Activated CD4-positive, alpha-beta T cell treated with anti-CD3 and anti-CD28 coated beads for 36 hours (primary cell): ENCODE measurements at regions of chr16 and their contacts with region 1.

Region 1: DNA sequence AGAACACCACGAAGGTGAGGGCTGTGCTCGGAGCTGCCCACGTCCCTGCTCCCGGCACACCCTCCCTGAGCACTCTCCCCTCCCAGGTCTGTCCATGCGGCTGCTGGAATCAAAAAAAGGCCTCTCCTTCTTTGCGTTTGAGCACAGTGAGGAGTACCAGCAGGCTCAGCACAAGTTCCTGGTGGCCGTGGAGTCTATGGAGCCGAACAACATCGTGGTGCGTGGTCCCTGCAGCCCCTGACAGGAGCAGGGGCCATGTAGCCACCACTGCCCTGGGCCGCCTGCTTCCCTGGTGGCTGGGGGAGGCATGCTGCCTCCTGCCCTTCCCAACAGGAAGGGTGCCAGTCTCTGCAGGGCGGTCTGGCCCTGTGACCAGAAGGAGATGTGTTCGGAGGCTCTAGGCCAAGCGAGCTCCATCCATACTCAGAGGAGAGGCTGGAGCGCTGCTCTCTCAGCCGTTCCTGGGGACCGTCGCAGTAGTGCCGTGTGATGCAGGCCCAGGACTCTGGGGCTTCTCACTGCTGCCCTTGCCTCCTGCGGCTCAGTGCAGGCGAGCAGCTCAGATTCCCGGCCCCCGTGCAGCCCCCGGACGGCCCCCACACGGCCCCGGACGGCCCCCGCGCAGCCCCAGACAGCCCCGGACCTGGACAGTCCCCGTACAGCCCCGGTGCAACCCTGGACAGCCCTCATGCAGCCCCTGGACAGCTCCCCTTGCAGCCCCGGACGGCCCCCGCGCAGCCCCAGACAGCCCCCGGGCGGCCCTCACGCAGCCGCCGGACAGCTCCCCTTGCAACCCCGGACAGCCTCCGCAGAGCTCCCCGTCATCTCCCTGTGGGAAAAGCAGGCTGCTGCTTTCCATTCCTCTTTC is 20.5 kb downstream of the TCF25 start:
- DNase-seq: no peak
- ATAC-seq: no peak
- H3K4me3 Mint-ChIP-seq: no peak overlapping the region
- H3K27ac Mint-ChIP-seq: no peak overlapping the region
- H3K4me1 Mint-ChIP-seq: peaks cover 12% of the 10 kb centered on the region
- H3K27me3 Mint-ChIP-seq: no peaks in the 10 kb centered on the region

Region 2: DNA sequence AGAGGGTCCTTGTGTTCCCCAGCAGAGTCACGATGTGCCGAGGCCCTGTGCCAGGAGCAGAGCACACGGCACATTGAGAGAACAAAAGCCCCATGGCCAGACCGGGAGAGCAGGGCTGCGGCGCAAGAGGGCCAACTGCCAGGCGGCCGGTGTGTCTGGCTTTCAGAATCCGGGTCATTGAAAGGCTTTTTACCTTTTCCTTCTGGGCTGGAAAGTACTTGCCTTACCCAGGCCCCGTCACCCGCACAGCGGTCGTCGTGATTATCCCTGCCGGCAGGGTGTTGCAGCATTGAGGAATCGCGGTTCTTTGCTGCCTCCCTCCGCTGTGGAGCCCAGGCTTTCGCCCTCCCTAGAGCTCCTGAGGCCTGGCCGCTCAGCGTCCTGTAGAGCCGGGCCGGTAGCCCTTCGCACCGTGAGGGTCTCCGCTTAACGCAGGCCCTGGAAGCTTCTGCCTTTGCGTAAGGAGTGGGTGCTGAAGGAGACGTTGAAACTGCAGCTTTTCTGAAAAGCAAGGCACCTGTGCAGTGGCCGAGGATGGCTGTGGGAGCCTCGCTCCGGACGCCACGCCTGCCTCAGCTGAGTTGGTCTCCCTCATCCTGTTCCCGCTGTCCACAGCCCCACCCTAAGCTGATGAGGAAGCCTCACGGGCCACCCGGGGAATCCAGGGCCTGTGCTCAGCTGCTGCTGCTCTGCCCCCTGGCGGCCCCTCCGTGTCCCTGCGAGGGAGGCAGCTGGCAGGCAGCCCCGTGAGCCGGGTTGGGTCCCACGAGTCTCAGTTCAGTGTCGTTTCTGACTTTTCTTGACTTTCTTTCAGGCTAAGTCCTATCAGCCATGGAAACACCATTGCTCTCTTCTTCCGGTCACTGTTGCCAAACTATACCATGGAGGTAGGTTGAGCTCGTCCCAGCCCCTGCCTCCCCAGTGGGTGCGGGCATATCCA is 16.2 kb after region 1 on chr16:
- CTCF ChIA-PET with region 1: interaction called, 11 read pairs
- POLR2A ChIA-PET with region 1: no interaction called
- intact Hi-C with region 1: no loop called
- DNase-seq: peak; percentile 83
- ATAC-seq: peak; percentile 89
- H3K4me3 Mint-ChIP-seq: no peak overlapping the region
- H3K27ac Mint-ChIP-seq: no peak overlapping the region
- H3K4me1 Mint-ChIP-seq: no peaks in the 10 kb centered on the region
- H3K27me3 Mint-ChIP-seq: no peaks in the 10 kb centered on the region

Region 3: DNA sequence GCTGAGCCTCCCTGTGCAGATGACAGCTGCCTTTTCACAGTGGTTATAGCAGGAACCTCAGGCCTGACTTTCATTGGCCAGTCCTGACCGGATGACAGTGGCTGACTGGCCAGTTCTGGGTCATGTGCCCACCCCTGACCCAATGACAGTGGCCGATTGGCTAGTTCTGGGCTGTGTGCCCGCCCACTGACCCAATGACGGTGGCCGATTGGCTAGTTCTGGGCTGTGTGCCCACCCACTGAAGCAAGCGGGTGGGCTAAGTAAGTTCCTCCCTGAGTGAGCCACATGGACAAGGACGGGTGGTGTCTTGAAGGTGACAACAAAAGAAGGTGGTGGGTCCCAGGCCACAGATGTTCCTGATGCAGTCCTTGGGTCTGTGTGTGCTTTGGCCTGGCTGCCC is 64.2 kb after region 1 on chr16:
- CTCF ChIA-PET with region 1: no interaction called
- POLR2A ChIA-PET with region 1: no interaction called
- intact Hi-C with region 1: no loop called
- DNase-seq: peak; percentile 16
- ATAC-seq: peak; percentile 69
- H3K4me3 Mint-ChIP-seq: no peak overlapping the region
- H3K27ac Mint-ChIP-seq: no peak overlapping the region
- H3K4me1 Mint-ChIP-seq: no peaks in the 10 kb centered on the region
- H3K27me3 Mint-ChIP-seq: no peaks in the 10 kb centered on the region